Activated naive CD4-positive, alpha-beta T cell treated with anti-CD3 and anti-CD28 coated beads for 36 hours (primary cell): ENCODE measurements at regions of chr17 and their contacts with region 1.

Region 1: DNA sequence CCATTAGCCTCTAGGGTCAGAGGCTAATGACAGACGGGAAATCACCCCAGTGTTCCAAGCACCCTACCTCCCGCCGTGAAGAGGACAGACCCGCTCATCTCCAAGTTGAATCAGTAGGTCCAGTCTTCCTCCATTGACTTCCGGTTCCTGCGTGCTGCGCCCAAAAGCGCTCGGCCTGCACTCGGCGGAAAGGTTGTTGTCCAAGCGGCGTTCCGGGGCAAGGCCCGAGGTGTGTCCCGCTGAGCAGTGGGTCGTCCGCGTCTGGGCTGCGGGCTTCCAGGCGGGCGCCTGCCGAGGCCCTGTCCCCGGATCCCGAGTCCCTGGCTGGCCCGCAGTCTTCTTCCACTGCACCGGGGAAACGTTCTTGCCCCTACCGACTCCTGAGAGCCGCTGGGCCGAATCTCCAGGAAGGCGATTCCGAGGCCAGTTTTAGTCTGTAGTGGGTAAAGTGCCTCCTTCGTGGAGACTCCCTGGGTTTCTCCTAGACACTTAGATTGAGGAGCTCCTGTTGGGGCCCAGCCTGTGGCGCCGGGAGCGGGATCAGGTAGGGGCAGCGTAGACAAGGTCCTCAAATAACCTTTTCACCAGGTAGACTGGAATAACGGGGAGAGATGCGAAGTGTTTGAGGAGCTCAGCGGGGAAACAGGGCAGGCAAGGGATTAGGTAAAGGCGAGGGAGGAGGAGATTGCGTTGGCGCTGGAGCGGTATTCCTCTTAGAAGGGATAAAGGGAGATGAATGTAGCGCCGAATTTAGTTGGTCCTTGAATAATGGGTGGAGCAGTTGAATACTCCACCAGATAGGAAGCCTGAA is at the start of gene TEFM:
- DNase-seq: peak; percentile 93
- H3K4me3 Mint-ChIP-seq: peak within 1 kb of the TSS; percentile 99
- H3K27ac Mint-ChIP-seq: peak within 1 kb of the TSS; percentile 94
- H3K4me1 Mint-ChIP-seq: peaks cover 53% of the 10 kb centered on the region
- H3K27me3 Mint-ChIP-seq: no peaks in the 10 kb centered on the region
- total RNA-seq, gene TEFM: 8.6 to 9.7 TPM

Region 2: DNA sequence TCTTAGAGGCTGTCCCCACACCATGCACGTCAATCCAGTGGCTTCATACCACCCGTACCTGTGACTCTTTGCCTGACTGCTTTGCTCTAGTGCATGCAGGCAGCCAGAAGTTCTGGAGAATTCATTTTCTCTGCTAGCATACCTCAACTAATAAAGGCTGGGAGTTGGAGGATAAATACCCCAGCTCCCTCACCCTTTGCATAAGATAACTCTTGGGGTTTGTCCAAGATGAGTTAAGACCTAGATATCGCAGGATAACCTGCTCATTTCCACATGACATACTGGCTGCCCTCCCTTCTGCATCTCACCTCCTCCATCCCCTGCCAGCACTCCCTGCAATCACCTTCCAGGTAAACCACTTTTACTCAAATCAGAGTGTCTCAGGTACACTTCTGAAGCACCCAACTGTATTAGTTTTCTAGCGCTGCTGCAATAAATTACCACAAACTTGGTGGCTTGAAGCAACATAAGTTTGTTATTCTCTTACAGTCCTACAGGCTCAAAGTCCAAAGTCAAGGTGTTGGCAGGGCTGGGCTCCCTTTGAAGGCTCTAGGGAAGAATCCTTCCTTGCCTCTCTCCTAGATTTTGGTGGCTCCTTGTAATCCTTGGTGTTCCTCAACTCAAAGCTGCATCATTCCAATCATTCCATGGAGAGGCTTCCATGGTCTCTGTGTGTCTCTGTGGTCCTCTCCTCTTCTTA is 228.6 kb before region 1 on chr17:
- CTCF ChIA-PET with region 1: no interaction called
- intact Hi-C with region 1: no loop called
- DNase-seq: no peak
- H3K4me3 Mint-ChIP-seq: no peak overlapping the region
- H3K27ac Mint-ChIP-seq: no peak overlapping the region
- H3K4me1 Mint-ChIP-seq: no peaks in the 10 kb centered on the region
- H3K27me3 Mint-ChIP-seq: no peaks in the 10 kb centered on the region

Region 3: GRCh38 chr17:30831663-30832437 is 74.5 kb before region 1 on chr17 and contains the start of gene ATAD5:
- CTCF ChIA-PET with region 1: no interaction called
- intact Hi-C with region 1: loop called (anchors 5 kb)
- DNase-seq: peak; percentile 93
- H3K4me3 Mint-ChIP-seq: peak within 1 kb of the TSS; percentile 97
- H3K27ac Mint-ChIP-seq: peak within 1 kb of the TSS; percentile 90
- H3K4me1 Mint-ChIP-seq: peaks cover 23% of the 10 kb centered on the region
- H3K27me3 Mint-ChIP-seq: no peaks in the 10 kb centered on the region
- total RNA-seq, gene ATAD5: 33.3 to 33.5 TPM

Region 4: GRCh38 chr17:30886187-30886586 is 20.1 kb before region 1 on chr17:
- CTCF ChIA-PET with region 1: no interaction called
- intact Hi-C with region 1: no loop called
- DNase-seq: no peak
- H3K4me3 Mint-ChIP-seq: no peak overlapping the region
- H3K27ac Mint-ChIP-seq: no peak overlapping the region
- H3K4me1 Mint-ChIP-seq: no peaks in the 10 kb centered on the region
- H3K27me3 Mint-ChIP-seq: no peaks in the 10 kb centered on the region

Region 5: DNA sequence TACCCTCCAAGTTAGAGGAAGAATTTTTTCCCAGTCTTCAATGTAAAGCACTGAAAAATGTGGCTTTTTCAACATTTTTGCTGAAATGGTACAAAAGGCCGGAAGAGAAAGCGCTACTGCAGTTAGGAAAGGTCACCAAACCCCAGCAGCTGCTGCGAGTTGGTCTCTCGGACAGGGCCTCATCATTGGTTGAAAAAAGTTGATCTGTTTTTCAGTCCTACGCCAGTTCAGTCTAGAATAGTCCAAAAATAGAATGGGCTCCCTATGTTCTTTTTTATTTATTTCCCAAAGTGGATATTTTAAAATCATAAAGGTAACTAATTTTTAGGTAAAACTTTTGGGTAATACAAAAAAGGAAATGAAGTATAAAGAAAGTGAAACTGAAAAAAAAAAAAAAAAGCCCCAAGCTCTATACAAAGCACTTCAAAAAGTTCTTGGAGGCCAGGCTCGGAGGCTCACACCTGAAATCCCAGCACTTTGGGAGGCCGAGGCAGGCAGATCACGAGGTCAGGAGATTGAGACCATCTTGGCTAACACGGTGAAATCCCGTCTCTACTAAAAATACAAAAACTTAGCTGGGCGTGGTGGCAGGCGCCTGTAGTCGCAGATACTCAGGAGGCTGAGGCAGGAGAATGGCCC is 32.9 kb after region 1 on chr17:
- CTCF ChIA-PET with region 1: no interaction called
- intact Hi-C with region 1: no loop called
- DNase-seq: peak; percentile 19
- H3K4me3 Mint-ChIP-seq: no peak overlapping the region
- H3K27ac Mint-ChIP-seq: no peak overlapping the region
- H3K4me1 Mint-ChIP-seq: peaks cover 6% of the 10 kb centered on the region
- H3K27me3 Mint-ChIP-seq: no peaks in the 10 kb centered on the region

Region 6: GRCh38 chr17:31008374-31009041 is 102.2 kb after region 1 on chr17:
- CTCF ChIA-PET with region 1: no interaction called
- intact Hi-C with region 1: loop called (anchors 2 kb)
- DNase-seq: peak; percentile 65
- H3K4me3 Mint-ChIP-seq: peak overlapping the region; percentile 85
- H3K27ac Mint-ChIP-seq: peak overlapping the region; percentile 82
- H3K4me1 Mint-ChIP-seq: peaks cover 15% of the 10 kb centered on the region
- H3K27me3 Mint-ChIP-seq: peaks cover 2% of the 10 kb centered on the region

Region 7: GRCh38 chr17:31094600-31095238 is 188.4 kb after region 1 on chr17 and contains the start of gene NF1:
- CTCF ChIA-PET with region 1: no interaction called
- intact Hi-C with region 1: loop called (anchors 10 kb)
- DNase-seq: peak; percentile 92
- H3K4me3 Mint-ChIP-seq: peak within 1 kb of the TSS; percentile 94
- H3K27ac Mint-ChIP-seq: peak within 1 kb of the TSS; percentile 72
- H3K4me1 Mint-ChIP-seq: peaks cover 11% of the 10 kb centered on the region
- H3K27me3 Mint-ChIP-seq: no peaks in the 10 kb centered on the region
- total RNA-seq, gene NF1: 19.5 to 22.8 TPM

Region 8: GRCh38 chr17:31373150-31374093 is 467.1 kb after region 1 on chr17:
- CTCF ChIA-PET with region 1: interaction called, 3 read pairs
- intact Hi-C with region 1: loop called (anchors 10 kb)
- DNase-seq: peak; percentile 34
- H3K4me3 Mint-ChIP-seq: no peak overlapping the region
- H3K27ac Mint-ChIP-seq: no peak overlapping the region
- H3K4me1 Mint-ChIP-seq: peaks cover 24% of the 10 kb centered on the region
- H3K27me3 Mint-ChIP-seq: no peaks in the 10 kb centered on the region